ENCODE measurements at regions of chr12 and their contacts with region 1.

Region 1: GRCh38 chr12:46661110-46661845 is 164.5 kb downstream of the SLC38A4 start:
- DNase-seq: peak; percentile 39
- H3K4me3 ChIP-seq: no peak overlapping the region
- H3K27ac ChIP-seq: no peak overlapping the region
- H3K4me1 ChIP-seq: no peaks in the 10 kb centered on the region
- CTCF ChIP-seq: peak; percentile 78

Region 2: DNA sequence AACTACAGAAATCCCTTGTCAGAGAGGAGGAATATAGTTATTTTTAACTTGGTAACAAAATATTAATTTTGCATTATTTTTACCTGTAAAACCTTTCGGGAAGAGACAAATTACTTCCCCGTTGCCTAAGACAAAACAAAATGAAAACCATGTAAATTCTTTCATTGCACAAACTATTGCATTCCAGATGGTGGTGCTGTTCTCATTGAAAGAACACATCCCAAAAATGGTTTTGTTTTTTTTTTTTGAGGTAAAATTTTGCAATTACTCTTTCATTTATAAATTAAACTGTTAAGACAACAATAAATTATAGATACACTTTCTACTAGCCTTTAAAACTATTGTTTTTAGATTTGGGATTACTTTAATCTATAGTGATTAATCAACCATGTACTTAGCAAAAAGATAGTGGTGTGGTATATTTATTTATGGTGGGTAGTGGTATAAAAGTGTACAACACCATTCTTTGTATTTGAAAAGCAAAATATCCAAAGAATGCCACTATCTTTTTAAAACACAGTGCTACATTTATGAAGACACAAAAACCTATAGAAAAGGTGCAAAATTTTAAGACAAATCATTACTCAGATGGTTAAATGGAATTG is 507.9 kb before region 1 on chr12:
- CTCF ChIA-PET with region 1: no interaction called
- POLR2A ChIA-PET with region 1: interaction called, 3 read pairs
- intact Hi-C with region 1: loop called (anchors 10 kb)
- DNase-seq: peak; percentile 55
- H3K4me3 ChIP-seq: no peak overlapping the region
- H3K27ac ChIP-seq: no peak overlapping the region
- H3K4me1 ChIP-seq: peaks cover 11% of the 10 kb centered on the region
- CTCF ChIP-seq: peak; percentile 95

Region 3: GRCh38 chr12:46357438-46358324 is 303.6 kb before region 1 on chr12:
- CTCF ChIA-PET with region 1: no interaction called
- POLR2A ChIA-PET with region 1: no interaction called
- intact Hi-C with region 1: loop called (anchors 10 kb)
- DNase-seq: no peak
- H3K4me3 ChIP-seq: no peak overlapping the region
- H3K27ac ChIP-seq: no peak overlapping the region
- H3K4me1 ChIP-seq: peaks cover 8% of the 10 kb centered on the region
- CTCF ChIP-seq: no peak